T-cell (primary cell): ENCODE measurements at regions of chr2 and their contacts with region 1.

Region 1: GRCh38 chr2:126761981-126762878 is 106.3 kb downstream of the GYPC start:
- DNase-seq: peak; percentile 22 to 77 (median 51)
- ATAC-seq: peak; percentile 89 to 97 (median 95)
- H3K4me3 ChIP-seq: peak overlapping the region in 1 of 2 donors; percentile 25
- H3K4me3 Mint-ChIP-seq: peak overlapping the region; percentile 58 to 68 (median 58)
- H3K27ac ChIP-seq: peak overlapping the region; percentile 36
- H3K27ac Mint-ChIP-seq: peak overlapping the region; percentile 96 to 97
- H3K4me1 ChIP-seq: peaks cover 37 to 49% of the 10 kb centered on the region in 2 experiments
- H3K4me1 Mint-ChIP-seq: peaks cover 68 to 77% (median 77%) of the 10 kb centered on the region in 3 donors
- H3K27me3 ChIP-seq: peaks cover 0 to 4% of the 10 kb centered on the region in 2 experiments
- H3K27me3 Mint-ChIP-seq: peaks cover 0 to 1% of the 10 kb centered on the region in 2 donors

Region 2: DNA sequence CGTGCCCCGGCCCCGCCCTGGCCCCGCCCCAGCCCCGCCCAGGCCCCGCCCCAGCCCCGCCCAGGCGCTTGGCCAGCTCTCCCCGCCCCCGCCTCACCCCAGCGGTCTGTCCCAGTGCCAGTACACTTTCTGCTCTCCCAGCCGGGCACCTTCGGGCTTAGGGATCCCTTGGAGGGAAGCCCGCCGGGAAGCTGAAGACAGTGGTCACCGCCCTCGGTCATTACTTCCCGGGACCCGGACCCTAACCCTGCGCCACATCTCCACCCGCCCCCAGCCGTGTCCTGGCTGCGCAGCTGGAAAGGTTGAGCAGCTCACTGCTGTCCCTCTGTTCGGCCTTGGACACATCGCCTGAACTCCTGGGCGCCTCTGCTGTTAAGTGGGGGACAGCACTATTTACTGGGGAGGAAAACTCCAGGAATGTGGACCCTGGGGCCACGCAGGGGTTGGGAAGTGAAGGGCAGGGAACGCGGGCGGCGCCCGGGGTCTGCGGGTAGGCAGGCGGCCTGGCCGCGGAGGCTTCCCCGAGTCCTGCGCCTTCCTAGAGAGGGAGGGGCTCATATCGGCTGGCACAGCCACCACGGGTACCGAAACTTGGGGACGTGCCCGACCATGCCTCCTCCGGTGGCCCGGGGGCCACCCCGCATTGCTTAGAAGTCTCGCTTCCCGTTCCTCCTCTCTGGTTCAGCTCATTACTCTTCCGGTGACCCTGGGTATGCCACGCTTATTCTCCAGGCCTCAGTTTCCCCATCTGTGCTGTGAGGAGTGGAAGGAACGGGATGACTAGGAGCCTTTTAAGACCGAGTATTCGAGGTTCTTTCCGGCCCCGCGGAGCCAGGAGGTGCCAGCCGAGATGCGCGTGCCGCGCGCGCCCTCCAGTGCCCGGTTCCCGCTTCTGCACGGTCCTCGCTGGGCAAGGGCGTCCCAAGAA is 14.7 kb after region 1 on chr2:
- CTCF ChIA-PET with region 1: interaction called, 4 to 15 read pairs
- POLR2A ChIA-PET with region 1: interaction called in 1 of 2 experiments, 3 read pairs
- DNase-seq: peak; percentile 46 to 88 (median 77)
- ATAC-seq: peak; percentile 85 to 89 (median 88)
- H3K4me3 ChIP-seq: peak overlapping the region; percentile 72 to 91
- H3K4me3 Mint-ChIP-seq: peak overlapping the region; percentile 92 to 93 (median 93)
- H3K27ac ChIP-seq: peak overlapping the region; percentile 34
- H3K27ac Mint-ChIP-seq: peak overlapping the region; percentile 88 to 95
- H3K4me1 ChIP-seq: peaks cover 0 to 6% of the 10 kb centered on the region in 2 experiments
- H3K4me1 Mint-ChIP-seq: peaks cover 17 to 21% (median 17%) of the 10 kb centered on the region in 3 donors
- H3K27me3 ChIP-seq: peaks cover 0 to 15% of the 10 kb centered on the region in 2 experiments
- H3K27me3 Mint-ChIP-seq: peaks cover 7 to 8% of the 10 kb centered on the region in 2 donors

Region 3: DNA sequence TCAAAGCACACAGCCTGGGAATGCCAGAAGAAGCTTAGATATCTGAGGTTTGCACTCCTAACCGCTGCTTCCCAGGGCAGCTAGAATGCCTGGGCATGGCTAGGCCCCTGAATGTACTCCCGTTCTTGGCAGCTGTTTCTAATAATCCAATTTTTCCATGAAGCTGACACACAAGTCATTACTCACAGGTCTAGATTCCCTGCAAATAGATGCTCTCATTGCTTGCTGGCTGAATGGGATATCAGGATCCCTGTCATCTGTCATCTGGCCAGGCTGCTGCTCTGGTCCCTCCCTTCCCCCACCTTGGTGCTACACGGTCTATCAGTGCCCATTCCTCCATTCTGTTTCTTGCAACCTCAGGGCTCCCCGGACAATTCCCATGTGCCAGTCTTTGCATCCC is 95.8 kb after region 1 on chr2:
- CTCF ChIA-PET with region 1: no interaction called
- POLR2A ChIA-PET with region 1: no interaction called
- DNase-seq: no peak
- ATAC-seq: no peak
- H3K4me3 ChIP-seq: no peak overlapping the region
- H3K4me3 Mint-ChIP-seq: no peak overlapping the region
- H3K27ac ChIP-seq: no peak overlapping the region
- H3K27ac Mint-ChIP-seq: no peak overlapping the region
- H3K4me1 ChIP-seq: no peaks in the 10 kb centered on the region
- H3K4me1 Mint-ChIP-seq: no peaks in the 10 kb centered on the region
- H3K27me3 ChIP-seq: peaks cover 2 to 25% of the 10 kb centered on the region in 2 experiments
- H3K27me3 Mint-ChIP-seq: peaks cover 15 to 18% of the 10 kb centered on the region in 2 donors

Region 4: DNA sequence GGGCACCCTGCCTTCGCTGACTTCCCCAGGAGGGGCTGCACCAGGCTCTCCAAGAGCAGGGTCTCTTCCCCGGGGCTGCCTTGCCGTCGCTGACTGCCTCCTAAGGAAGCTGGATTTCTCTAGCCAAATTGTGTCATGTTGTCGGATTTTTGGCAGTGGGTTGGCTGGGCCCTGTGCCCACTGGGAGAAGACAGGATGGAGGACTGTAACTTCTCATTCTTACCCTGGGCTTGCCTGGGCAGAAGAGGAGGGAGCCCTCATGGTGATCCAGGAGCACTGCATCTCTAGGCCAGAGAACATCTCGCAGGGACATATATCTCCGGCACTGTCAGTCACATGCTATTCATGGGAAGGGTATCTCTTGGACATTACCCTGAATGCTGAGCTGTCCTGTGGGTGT is 779.6 kb after region 1 on chr2:
- CTCF ChIA-PET with region 1: no interaction called
- POLR2A ChIA-PET with region 1: no interaction called
- DNase-seq: no peak
- ATAC-seq: no peak
- H3K4me3 ChIP-seq: no peak overlapping the region
- H3K4me3 Mint-ChIP-seq: no peak overlapping the region
- H3K27ac ChIP-seq: no peak overlapping the region
- H3K27ac Mint-ChIP-seq: no peak overlapping the region
- H3K4me1 ChIP-seq: no peaks in the 10 kb centered on the region
- H3K4me1 Mint-ChIP-seq: no peaks in the 10 kb centered on the region
- H3K27me3 ChIP-seq: peaks cover 0 to 24% of the 10 kb centered on the region in 2 experiments
- H3K27me3 Mint-ChIP-seq: peaks cover 2 to 5% of the 10 kb centered on the region in 2 donors